Heart left ventricle (tissue), 16 donors: ENCODE measurements at regions of chr1 and their contacts with region 1.

Region 1: GRCh38 chr1:183543619-183544204 is 46.5 kb downstream of the NCF2 start:
- DNase-seq: no peak
- ATAC-seq: peak; percentile 61 to 86 (median 78)
- H3K4me3 ChIP-seq: no peak overlapping the region
- H3K27ac ChIP-seq: peak overlapping the region in 3 of 12 donors; percentile 9 to 13 (median 10)
- H3K4me1 ChIP-seq: peaks cover 0 to 35% (median 10%) of the 10 kb centered on the region in 12 donors
- H3K27me3 ChIP-seq: no peaks in the 10 kb centered on the region
- CTCF ChIP-seq: peak; percentile 41 to 77 (median 60)
- POLR2A ChIP-seq: no peak

Region 2: GRCh38 chr1:183498342-183498991 is 45.2 kb before region 1 on chr1:
- intact Hi-C with region 1: no loop called
- DNase-seq: no peak
- ATAC-seq: no peak
- H3K4me3 ChIP-seq: no peak overlapping the region
- H3K27ac ChIP-seq: no peak overlapping the region
- H3K4me1 ChIP-seq: peaks cover 0 to 31% (median 9%) of the 10 kb centered on the region in 12 donors
- H3K27me3 ChIP-seq: no peaks in the 10 kb centered on the region
- CTCF ChIP-seq: no peak
- POLR2A ChIP-seq: no peak

Region 3: DNA sequence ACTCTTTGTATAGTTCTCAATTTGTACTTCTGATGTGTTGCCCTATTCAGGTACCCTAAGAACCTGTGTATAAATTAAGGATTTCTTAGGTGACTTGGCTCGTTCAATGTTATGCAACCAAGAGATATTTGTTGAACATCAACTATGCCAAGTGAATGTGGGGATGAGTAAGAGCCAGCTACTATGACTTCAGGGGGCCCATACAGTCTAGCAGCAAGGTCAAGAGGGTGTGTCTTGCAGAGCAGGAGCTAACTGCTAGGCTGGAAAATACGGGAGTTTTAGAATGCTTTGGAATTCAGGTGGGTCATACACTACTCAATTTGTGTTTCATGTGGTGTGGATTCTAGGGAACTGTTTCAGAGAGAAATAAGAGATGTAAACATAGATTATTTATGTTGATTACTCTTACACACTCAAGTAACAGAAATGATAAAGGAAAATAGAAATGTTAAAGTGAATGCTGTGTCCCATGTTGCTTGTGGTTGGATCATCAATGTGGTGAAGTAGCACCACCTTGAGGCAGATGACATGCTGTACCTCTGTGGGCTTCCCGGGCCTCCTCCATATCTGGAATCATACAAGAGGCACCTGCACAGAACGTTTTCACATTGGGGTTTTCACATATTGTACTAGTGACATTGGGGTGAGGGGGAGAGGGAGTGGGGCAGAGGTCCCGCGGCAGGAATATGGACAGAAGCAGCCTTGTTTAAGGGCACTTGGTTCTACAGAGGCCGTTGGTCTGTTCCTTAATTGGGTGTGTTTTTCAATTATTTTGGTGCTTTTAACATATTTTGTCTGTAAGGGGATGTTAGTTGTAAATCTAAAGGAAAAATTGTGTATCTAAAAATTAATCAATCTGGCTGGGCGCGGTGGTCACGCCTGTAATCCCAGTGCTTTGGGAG is 79.4 kb after region 1 on chr1:
- intact Hi-C with region 1: loop called in 3 of 10 experiments (anchors 10 kb)
- DNase-seq: peak in 3 of 5 donors; percentile 38 to 53 (median 52)
- ATAC-seq: peak; percentile 83 to 94 (median 92)
- H3K4me3 ChIP-seq: no peak overlapping the region
- H3K27ac ChIP-seq: peak overlapping the region in 1 of 12 donors; percentile 27
- H3K4me1 ChIP-seq: peaks cover 0 to 51% (median 28%) of the 10 kb centered on the region in 12 donors
- H3K27me3 ChIP-seq: no peaks in the 10 kb centered on the region
- CTCF ChIP-seq: peak; percentile 45 to 79 (median 64)
- POLR2A ChIP-seq: no peak